Ascending aorta (tissue), 2 donors: ENCODE measurements at regions of chr9 and their contacts with region 1.

Region 1: GRCh38 chr9:16871356-16872151 is 1.1 kb upstream of the BNC2 start:
- DNase-seq: peak in 1 of 2 donors; percentile 83
- H3K4me3 ChIP-seq: peak overlapping the region; percentile 76 to 92
- H3K27ac ChIP-seq: peak overlapping the region; percentile 84 to 90
- H3K4me1 ChIP-seq: no peaks in the 10 kb centered on the region
- H3K27me3 ChIP-seq: no peaks in the 10 kb centered on the region
- CTCF ChIP-seq: no peak

Region 2: GRCh38 chr9:16197578-16198370 is 673.8 kb before region 1 on chr9:
- intact Hi-C with region 1: loop called (anchors 5 kb)
- DNase-seq: no peak
- H3K4me3 ChIP-seq: peak overlapping the region in 1 of 2 donors; percentile 22
- H3K27ac ChIP-seq: peak overlapping the region; percentile 35 to 73
- H3K4me1 ChIP-seq: peaks cover 0 to 24% of the 10 kb centered on the region in 2 donors
- H3K27me3 ChIP-seq: no peaks in the 10 kb centered on the region
- CTCF ChIP-seq: no peak

Region 3: GRCh38 chr9:16521868-16522411 is 349.6 kb before region 1 on chr9:
- intact Hi-C with region 1: loop called (anchors 5 kb)
- DNase-seq: peak in 1 of 2 donors; percentile 72
- H3K4me3 ChIP-seq: no peak overlapping the region
- H3K27ac ChIP-seq: peak overlapping the region; percentile 58 to 64
- H3K4me1 ChIP-seq: peaks cover 0 to 14% of the 10 kb centered on the region in 2 donors
- H3K27me3 ChIP-seq: no peaks in the 10 kb centered on the region
- CTCF ChIP-seq: no peak

Region 4: DNA sequence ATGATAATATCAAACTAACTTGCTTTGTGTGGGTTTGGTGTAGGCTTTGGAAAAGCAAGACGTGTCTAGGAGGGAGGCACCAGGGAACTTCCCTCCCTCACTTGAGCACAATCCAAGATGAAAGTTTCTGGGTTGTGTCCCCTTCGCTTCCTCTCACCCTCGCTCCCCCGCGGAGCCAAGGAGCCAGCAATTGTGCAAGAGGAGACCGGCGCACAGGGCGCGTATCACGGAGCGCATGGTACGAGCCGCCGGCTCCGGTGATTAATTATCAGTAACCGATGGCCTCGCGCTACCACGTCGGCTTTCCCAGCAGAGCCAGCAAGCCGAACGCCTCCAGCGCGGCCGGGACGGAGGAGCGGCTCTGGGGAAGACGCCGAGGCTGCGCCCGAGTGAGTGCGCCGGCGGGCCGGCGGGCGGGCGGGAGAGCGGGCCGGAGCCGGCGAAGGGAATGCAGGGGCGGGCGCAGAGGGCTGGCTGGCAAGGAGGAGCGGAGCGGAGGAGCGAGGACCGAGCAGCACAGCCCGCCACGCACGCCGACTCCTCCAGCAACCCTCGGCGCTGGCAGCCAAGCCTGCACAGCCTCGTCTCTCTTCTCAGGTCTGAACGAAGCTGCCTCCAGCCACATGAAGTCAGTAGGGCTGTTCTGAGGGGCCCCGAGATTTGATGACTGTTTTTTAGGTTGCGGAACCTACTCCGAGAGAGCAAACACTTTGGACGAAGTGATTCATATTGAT is 144.7 kb before region 1 on chr9:
- intact Hi-C with region 1: loop called (anchors 2 kb)
- DNase-seq: peak in 1 of 2 donors; percentile 91
- H3K4me3 ChIP-seq: peak overlapping the region; percentile 69 to 76
- H3K27ac ChIP-seq: peak overlapping the region; percentile 92 to 95
- H3K4me1 ChIP-seq: peaks cover 0 to 2% of the 10 kb centered on the region in 2 donors
- H3K27me3 ChIP-seq: no peaks in the 10 kb centered on the region
- CTCF ChIP-seq: no peak

Region 5: GRCh38 chr9:16752601-16753000 is 119.0 kb before region 1 on chr9:
- intact Hi-C with region 1: no loop called
- DNase-seq: no peak
- H3K4me3 ChIP-seq: no peak overlapping the region
- H3K27ac ChIP-seq: no peak overlapping the region
- H3K4me1 ChIP-seq: no peaks in the 10 kb centered on the region
- H3K27me3 ChIP-seq: no peaks in the 10 kb centered on the region
- CTCF ChIP-seq: no peak

Region 6: GRCh38 chr9:16985559-16986348 is 114.2 kb after region 1 on chr9:
- intact Hi-C with region 1: loop called (anchors 5 kb)
- DNase-seq: peak; percentile 80 to 96
- H3K4me3 ChIP-seq: no peak overlapping the region
- H3K27ac ChIP-seq: peak overlapping the region; percentile 86 to 90
- H3K4me1 ChIP-seq: peaks cover 0 to 18% of the 10 kb centered on the region in 2 donors
- H3K27me3 ChIP-seq: no peaks in the 10 kb centered on the region
- CTCF ChIP-seq: no peak